H1 (cell line): ENCODE measurements at regions of chr10 and their contacts with region 1.

Region 1: DNA sequence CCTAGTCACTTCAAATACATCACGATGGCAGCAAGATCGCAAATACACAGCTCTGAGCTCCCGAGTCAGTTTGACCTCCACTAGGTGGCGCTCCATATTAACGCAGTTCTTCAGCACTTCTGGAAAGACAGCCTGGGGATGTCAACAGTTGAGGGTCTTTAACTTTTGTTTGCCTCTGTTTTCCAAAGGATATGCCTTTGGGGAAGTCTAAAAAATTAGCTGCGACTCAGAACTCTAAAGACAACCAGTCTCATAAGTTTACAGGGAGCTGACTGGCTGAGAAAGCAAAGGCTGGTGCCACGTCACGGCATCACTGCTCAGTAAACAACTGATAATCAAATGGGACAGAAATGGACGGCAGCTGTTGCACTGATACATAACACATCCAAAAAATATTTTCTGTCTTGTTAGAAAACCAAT is 458.8 kb downstream of the SORCS1 start:
- DNase-seq: peak; percentile 36 to 80
- H3K4me3 ChIP-seq: no peak overlapping the region
- H3K27ac ChIP-seq: no peak overlapping the region
- H3K4me1 ChIP-seq: peaks cover 8 to 10% (median 9%) of the 10 kb centered on the region in 4 experiments
- H3K27me3 ChIP-seq: no peaks in the 10 kb centered on the region
- CTCF ChIP-seq: peak; percentile 70 to 92 (median 82)
- EP300 ChIP-seq: no peak
- POLR2A ChIP-seq: no peak
- RAD21 ChIP-seq: peak; percentile 92 to 93

Region 2: GRCh38 chr10:106661767-106662140 is 43.9 kb before region 1 on chr10:
- CTCF ChIA-PET with region 1: no interaction called
- POLR2A ChIA-PET with region 1: no interaction called
- DNase-seq: no peak
- H3K4me3 ChIP-seq: no peak overlapping the region
- H3K27ac ChIP-seq: no peak overlapping the region
- H3K4me1 ChIP-seq: no peaks in the 10 kb centered on the region
- H3K27me3 ChIP-seq: no peaks in the 10 kb centered on the region
- CTCF ChIP-seq: no peak
- EP300 ChIP-seq: no peak
- POLR2A ChIP-seq: no peak
- RAD21 ChIP-seq: no peak

Region 3: DNA sequence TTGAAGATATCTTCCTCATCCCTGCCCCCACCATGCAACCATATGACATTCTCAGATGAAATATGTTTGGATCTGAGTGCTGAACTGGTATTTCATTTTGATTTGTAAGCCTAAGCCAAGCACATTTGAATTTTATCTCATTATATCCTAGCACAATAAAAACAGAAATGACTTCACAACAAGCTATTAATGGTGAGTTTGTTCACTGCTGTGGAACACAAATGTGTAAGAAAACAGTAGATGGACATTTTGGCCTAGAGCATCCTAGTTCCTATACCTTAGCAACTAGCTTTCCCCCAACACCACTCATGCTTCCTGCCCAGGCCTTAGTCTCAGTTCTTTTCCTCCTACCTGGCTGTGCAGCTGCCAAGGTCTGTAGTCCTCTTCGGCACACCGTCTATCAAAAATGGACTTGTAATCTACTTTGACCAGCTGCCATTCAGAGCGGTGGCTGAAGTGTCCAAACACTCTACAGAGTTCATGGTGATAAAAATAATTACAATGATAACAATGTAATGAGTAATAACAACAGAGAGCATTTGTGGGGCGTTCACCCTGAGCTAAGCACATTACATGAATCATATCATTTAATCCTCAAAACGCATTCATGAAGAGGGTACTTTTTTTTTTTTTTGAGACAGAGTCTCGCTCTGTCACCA is 33.0 kb before region 1 on chr10:
- CTCF ChIA-PET with region 1: no interaction called
- POLR2A ChIA-PET with region 1: no interaction called
- DNase-seq: no peak
- H3K4me3 ChIP-seq: no peak overlapping the region
- H3K27ac ChIP-seq: no peak overlapping the region
- H3K4me1 ChIP-seq: no peaks in the 10 kb centered on the region
- H3K27me3 ChIP-seq: no peaks in the 10 kb centered on the region
- CTCF ChIP-seq: no peak
- EP300 ChIP-seq: no peak
- POLR2A ChIP-seq: no peak
- RAD21 ChIP-seq: no peak

Region 4: DNA sequence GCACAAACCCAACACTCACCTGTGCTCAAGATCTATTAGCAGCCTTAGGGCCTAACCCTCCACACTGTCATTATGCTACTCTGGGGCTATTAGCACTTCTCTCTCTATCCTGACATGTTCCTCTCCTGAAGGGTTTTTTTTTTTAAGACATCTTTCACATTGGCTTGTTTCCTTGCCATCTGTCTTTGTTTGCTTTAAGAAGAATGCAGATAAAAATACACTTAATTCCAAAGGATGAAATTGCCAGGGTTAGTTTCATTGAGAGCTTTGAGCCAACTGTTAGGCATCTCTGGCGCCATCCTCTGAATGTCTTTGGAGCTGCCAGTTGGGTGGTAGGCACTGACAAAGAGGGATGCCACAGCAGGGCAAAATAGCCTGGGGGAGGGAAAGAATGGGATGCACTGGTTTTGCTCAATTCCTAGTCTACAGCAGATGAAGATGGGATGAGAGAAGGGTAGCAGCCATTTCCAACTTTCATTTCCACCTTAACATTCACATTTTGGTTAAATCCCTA is 59.6 kb after region 1 on chr10:
- CTCF ChIA-PET with region 1: interaction called, 26 read pairs
- POLR2A ChIA-PET with region 1: no interaction called
- DNase-seq: no peak
- H3K4me3 ChIP-seq: no peak overlapping the region
- H3K27ac ChIP-seq: no peak overlapping the region
- H3K4me1 ChIP-seq: no peaks in the 10 kb centered on the region
- H3K27me3 ChIP-seq: no peaks in the 10 kb centered on the region
- CTCF ChIP-seq: peak; percentile 38 to 51 (median 42)
- EP300 ChIP-seq: no peak
- POLR2A ChIP-seq: no peak
- RAD21 ChIP-seq: peak; percentile 40 to 54; a peak in 3 of 4 replicates

Region 5: GRCh38 chr10:106795619-106796018 is 89.9 kb after region 1 on chr10:
- CTCF ChIA-PET with region 1: interaction called, 28 read pairs
- POLR2A ChIA-PET with region 1: no interaction called
- DNase-seq: peak in 1 of 2 experiments; percentile 29
- H3K4me3 ChIP-seq: no peak overlapping the region
- H3K27ac ChIP-seq: no peak overlapping the region
- H3K4me1 ChIP-seq: no peaks in the 10 kb centered on the region; a peak in 1 of 7 replicates
- H3K27me3 ChIP-seq: no peaks in the 10 kb centered on the region
- CTCF ChIP-seq: peak; percentile 65 to 70 (median 68)
- EP300 ChIP-seq: no peak
- POLR2A ChIP-seq: no peak
- RAD21 ChIP-seq: peak; percentile 93 to 96